Heart right ventricle (tissue), 16 donors: ENCODE measurements at regions of chr2 and their contacts with region 1.

Region 1: DNA sequence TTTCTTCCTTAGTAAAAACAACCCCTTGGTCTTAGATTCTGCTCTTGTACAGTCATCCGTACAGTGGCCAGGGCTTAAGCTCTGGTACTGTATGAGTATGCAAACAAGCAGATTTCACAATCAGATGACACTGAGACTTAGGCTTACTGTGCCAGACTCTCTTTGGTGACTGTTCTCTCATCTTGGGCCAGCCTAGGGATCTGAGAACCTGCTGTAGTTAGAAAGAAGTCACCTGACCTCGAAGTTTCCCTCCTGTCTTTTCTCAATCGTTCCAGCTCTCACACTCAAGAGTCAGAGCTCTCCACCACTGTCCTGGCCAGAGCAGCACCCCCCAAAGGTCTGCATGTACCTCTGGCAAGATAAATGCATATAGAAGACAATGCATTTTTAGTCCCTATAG is 63.2 kb downstream of the ZEB2 start:
- DNase-seq: peak; percentile 15 to 29
- ATAC-seq: peak; percentile 34 to 90 (median 53)
- H3K4me3 ChIP-seq: no peak overlapping the region
- H3K27ac ChIP-seq: peak overlapping the region in 7 of 10 donors; percentile 18 to 77 (median 26)
- H3K4me1 ChIP-seq: peaks cover 4 to 100% (median 99%) of the 10 kb centered on the region in 9 donors
- H3K27me3 ChIP-seq: no peaks in the 10 kb centered on the region
- CTCF ChIP-seq: no peak

Region 2: DNA sequence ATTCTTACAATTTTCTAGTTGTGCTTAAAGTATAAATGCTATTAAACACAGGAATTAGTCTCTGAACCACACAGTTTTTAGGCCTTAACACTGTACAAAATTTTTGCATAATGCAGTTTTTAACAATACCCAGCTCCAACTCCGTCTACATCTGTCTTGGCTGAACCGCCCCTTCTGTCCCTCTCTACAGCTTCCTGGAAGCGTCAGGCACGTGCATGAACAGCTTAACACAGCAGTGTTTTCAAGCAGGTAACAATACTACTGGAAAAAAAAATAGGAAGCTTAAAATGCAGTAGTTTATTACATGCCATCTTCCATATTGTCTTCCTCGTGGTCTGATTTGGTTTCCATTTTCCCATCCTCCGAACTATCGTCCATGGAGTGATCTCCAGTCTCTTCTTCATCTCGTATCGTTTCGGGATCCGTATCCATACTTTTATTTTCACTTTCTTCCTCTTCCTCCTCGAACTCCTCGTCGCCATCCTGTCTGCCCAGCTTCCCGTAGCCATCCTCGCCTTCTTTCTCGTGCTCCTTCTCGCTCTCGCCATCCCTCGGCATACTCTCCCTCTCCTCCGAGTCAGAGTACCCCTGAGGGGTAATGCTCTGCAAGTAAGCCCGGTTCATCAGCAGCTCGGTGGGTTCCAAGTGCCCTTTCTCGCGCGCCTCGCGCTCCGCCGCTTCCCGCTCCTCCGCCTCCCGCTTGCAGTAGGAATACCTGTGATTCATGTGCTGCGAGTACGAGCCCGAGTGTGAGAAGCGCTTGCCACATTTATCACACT is 67.3 kb before region 1 on chr2:
- intact Hi-C with region 1: no loop called
- DNase-seq: no peak
- ATAC-seq: peak in 6 of 8 donors; percentile 11 to 61 (median 40)
- H3K4me3 ChIP-seq: peak overlapping the region in 3 of 10 donors; percentile 6 to 27 (median 12)
- H3K27ac ChIP-seq: peak overlapping the region in 6 of 10 donors; percentile 24 to 71 (median 45)
- H3K4me1 ChIP-seq: peaks cover 0 to 27% (median 10%) of the 10 kb centered on the region in 9 donors
- H3K27me3 ChIP-seq: no peaks in the 10 kb centered on the region
- CTCF ChIP-seq: no peak

Region 3: DNA sequence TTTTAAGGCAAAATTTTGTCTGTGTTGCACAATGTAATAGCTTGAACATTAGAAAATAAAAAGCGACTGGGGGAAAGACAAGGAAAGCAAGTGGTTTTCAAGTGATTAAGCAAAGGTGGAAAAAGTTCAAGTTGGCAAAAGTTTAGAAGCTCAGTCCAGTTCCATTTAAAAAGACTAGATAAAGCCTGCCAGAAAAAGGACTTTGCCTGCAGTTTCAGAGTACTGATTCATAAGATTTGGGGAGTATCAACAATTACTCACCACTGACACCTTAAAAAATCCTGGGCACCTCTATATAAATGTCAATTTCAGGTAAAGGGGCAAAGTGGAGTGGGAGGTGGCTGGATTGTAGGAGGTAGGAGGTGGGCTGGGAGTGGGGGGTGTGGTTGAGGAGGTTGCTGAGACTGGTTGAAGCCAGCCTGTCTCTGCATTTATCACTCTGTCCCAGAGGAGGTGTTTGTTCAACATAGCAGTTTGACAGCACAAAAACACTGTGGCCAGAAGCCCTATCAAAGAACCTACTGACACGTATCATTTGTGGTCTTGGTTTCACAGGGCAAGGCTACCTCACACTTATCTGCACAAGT is 48.7 kb after region 1 on chr2:
- intact Hi-C with region 1: loop called in 8 of 10 experiments (anchors 5 to 10 kb)
- DNase-seq: peak in 1 of 2 donors; percentile 43
- ATAC-seq: peak; percentile 32 to 84 (median 67)
- H3K4me3 ChIP-seq: peak overlapping the region in 2 of 10 donors; percentile 0 to 8
- H3K27ac ChIP-seq: peak overlapping the region; percentile 12 to 100 (median 98)
- H3K4me1 ChIP-seq: peaks cover 8 to 100% (median 86%) of the 10 kb centered on the region in 9 donors
- H3K27me3 ChIP-seq: no peaks in the 10 kb centered on the region
- CTCF ChIP-seq: no peak